ENCODE measurements at regions of chr13 and their contacts with region 1.

Region 1: DNA sequence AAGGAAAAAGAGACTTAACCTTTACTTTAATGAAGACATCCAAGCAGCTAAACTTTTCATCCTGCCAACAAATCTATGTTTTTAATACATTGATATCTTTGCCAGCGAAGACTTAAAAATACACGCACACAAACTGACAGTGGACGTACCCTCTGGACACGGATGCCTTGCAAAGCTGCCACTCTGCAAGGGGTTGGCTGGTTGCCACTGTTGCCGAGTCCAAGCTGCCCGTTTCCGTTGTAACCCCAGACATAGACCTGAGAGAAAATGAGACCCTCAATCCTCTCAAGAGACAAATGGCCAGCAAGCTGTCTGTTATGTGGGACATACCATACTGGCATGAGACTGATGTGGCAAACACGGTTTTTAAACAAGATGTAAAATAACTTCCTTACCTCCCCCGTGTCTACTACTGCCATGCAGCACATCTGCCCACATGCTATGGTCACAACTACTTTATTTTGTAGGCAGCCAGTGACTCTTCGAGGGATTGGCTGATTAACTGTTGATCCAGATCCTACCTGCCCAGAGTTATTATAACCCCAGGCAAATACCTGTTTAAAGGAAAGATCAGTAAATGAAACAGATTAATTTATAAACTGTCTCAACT is 21.2 kb downstream of the RCBTB2 start:
- DNase-seq: no peak
- ATAC-seq: no peak
- H3K4me3 ChIP-seq: no peak overlapping the region
- H3K27ac ChIP-seq: no peak overlapping the region
- H3K4me1 ChIP-seq: no peaks in the 10 kb centered on the region
- H3K27me3 ChIP-seq: no peaks in the 10 kb centered on the region
- CTCF ChIP-seq: no peak

Region 2: DNA sequence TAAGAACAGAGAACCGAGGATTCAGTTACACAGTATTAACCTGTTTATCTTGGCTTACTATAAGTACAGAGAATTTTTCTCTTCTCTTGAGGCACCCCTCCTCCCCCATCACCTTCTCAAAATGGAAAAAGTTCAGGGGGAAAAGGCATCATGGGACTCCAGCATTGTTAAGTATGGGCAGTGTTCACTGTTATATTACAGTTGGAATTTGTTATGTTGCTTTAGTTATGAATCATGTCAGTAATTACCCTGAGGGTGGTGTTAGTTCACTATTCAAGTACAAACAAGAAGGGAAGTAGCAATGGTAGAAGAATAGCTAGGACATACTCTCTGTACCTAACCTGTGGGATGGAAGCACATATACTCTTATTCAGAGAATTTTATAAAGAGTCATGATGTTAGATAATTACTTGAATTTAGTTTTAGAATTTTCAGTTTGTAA is 110.9 kb before region 1 on chr13:
- CTCF ChIA-PET with region 1: no interaction called
- POLR2A ChIA-PET with region 1: no interaction called
- in situ Hi-C with region 1: no loop called
- intact Hi-C with region 1: no loop called
- DNase-seq: no peak
- ATAC-seq: peak; percentile 98
- H3K4me3 ChIP-seq: no peak overlapping the region
- H3K27ac ChIP-seq: peak overlapping the region; percentile 57; the same call in 1 of the 2 replicates
- H3K4me1 ChIP-seq: peaks cover 16% of the 10 kb centered on the region
- H3K27me3 ChIP-seq: no peaks in the 10 kb centered on the region
- CTCF ChIP-seq: no peak

Region 3: DNA sequence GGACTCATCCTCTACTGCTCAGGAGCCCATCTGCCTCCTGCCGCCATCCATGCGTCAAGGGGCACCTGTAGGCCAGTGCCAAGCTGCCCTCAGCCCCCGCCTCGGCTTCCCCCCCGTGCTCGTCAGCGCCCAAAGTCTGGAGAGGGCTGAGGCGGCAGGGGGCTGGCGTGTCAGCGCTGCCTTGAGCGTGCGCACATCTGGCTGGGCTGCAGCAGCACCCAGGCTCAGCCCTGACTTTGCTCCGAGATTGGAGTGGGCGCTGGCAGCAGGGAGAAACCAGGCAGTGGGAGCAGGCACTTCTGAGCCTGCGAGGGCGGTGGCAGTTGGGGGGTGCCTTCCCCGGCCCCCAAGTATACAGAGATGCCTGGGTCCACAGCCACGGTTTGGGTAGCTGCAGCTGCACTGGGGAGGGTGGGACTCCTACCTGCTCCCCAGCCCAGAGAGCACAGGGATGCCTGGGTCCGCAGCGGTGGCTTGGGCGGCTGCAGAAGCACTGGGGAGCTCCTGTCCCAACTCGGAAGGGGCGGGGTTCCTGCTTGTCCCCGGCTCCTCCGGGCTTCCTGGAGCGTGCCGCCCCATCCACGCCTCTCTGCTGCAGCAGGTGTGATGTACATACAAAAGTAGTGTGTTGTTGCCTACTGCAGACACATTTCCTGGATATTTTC is 54.0 kb before region 1 on chr13:
- CTCF ChIA-PET with region 1: no interaction called
- POLR2A ChIA-PET with region 1: no interaction called
- in situ Hi-C with region 1: no loop called
- intact Hi-C with region 1: loop called (anchors 10 kb)
- DNase-seq: no peak
- ATAC-seq: no peak
- H3K4me3 ChIP-seq: no peak overlapping the region
- H3K27ac ChIP-seq: no peak overlapping the region
- H3K4me1 ChIP-seq: no peaks in the 10 kb centered on the region
- H3K27me3 ChIP-seq: no peaks in the 10 kb centered on the region
- CTCF ChIP-seq: no peak

Region 4: DNA sequence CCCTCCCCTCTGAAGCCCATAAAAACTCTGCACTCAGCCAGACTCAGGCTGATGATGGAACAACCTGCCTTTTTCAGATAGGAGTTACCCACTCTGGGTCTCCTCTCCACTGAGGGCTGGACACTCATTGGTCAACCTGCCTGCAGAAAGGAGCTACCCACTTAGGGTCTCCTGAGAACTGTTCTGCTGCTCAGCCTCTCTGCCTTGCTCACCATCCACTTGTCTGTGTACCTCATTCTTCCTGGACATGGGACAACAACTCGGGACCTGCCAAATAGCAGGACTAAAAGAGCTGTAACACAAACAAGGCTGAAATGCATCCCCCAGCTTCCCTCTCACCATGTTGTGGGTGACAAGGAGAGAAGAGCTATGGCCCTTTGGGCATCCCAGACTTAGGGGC is 39.6 kb after region 1 on chr13:
- CTCF ChIA-PET with region 1: no interaction called
- POLR2A ChIA-PET with region 1: no interaction called
- in situ Hi-C with region 1: no loop called
- intact Hi-C with region 1: no loop called
- DNase-seq: no peak
- ATAC-seq: no peak
- H3K4me3 ChIP-seq: no peak overlapping the region
- H3K27ac ChIP-seq: no peak overlapping the region
- H3K4me1 ChIP-seq: no peaks in the 10 kb centered on the region
- H3K27me3 ChIP-seq: no peaks in the 10 kb centered on the region
- CTCF ChIP-seq: no peak

Region 5: DNA sequence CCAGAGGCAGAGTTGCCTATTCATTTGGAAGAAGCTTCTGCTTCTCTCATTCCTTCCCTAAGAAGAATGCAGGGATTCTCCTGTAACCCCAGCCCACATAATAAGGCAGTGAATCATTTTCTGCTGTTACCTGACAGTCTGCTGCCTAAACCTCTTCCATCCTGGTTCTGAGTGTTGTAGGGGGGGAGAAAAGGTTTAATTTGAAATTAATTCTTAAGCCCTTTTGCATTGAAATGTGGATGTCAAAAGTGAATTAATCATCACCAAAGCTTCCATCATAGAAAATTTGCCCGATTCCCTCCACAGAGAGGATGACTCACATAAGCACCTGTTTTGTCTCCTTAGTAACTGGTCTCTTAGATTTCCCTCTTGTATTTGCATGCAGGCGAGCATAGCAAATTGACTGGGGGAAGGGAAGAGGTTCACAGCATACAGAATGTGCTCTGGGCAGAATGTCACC is 317.3 kb after region 1 on chr13:
- CTCF ChIA-PET with region 1: no interaction called
- POLR2A ChIA-PET with region 1: no interaction called
- in situ Hi-C with region 1: no loop called
- intact Hi-C with region 1: no loop called
- DNase-seq: no peak
- ATAC-seq: no peak
- H3K4me3 ChIP-seq: no peak overlapping the region
- H3K27ac ChIP-seq: no peak overlapping the region
- H3K4me1 ChIP-seq: no peaks in the 10 kb centered on the region
- H3K27me3 ChIP-seq: no peaks in the 10 kb centered on the region
- CTCF ChIP-seq: no peak

Measured in Panc1 (cell line).